ENCODE measurements at regions of chr2 and their contacts with region 1.

Region 1: DNA sequence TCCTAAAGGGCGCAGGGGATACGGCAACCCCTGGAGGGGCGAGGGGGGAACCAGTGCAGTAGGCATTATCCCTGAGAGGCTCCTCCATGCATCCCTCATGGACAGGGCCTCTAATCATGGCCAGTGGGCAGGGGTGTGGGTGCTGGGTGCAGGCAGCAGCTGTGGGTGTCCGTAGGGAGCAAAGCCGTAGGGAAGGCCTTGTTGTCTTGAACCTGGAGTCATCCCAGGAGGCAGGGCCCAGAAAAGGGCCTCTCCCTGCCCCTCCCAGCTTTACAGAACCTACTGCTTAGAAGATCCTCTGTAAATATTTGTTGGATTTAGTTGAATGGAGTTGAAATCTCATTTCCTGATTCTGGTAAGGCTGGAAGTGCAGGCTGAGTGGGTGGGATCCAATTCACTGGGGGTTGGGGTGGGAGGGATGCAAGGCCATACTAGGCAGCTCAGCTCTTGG is 207.0 kb upstream of the HAAO start:
- DNase-seq: no peak
- H3K4me3 ChIP-seq: no peak overlapping the region
- H3K27ac ChIP-seq: no peak overlapping the region
- H3K4me1 ChIP-seq: no peaks in the 10 kb centered on the region
- H3K27me3 ChIP-seq: no peaks in the 10 kb centered on the region
- CTCF ChIP-seq: no peak

Region 2: DNA sequence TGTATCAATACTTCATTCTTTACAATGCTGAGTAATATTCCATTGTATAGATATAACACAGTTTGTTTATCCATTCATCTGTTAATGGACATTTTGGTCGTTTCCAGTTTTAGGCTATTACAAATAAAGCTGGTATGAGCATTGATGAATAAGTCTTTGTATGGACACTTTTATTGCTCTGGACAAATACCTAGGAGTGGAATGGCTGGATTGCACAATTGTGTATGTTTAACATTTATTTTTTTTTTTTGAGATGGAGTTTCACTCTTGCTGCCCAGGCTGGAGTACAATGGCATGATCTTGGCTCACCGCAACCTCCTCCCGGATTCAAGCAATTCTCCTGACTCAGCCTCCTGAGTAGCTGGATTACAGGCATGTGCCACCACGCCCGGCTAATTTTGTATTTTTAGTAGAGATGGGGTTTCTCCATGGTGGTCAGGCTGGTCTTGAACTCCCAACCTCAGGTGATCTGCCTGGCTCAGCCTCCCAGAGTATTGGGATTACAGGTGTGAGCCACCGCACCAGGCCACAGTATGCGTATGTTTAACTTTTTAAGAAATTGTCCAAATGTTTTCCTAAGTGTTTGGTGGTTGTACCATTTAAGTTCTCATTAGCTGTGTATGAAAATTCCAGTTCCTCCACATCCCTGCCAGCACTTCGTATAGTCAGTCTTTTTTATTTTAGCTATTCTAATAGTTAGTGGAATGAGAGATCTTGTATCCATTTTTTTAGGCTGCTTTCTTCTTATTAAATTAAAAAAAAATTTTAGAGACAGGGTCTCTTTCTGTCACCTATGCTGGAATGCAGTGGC is 12.1 kb before region 1 on chr2:
- CTCF ChIA-PET with region 1: no interaction called
- dilution Hi-C with region 1: no loop called
- in situ Hi-C with region 1: no loop called
- intact Hi-C with region 1: loop called (anchors 1 kb)
- DNase-seq: peak; percentile 97
- H3K4me3 ChIP-seq: no peak overlapping the region
- H3K27ac ChIP-seq: peak overlapping the region; percentile 98
- H3K4me1 ChIP-seq: peaks cover 34% of the 10 kb centered on the region
- H3K27me3 ChIP-seq: no peaks in the 10 kb centered on the region
- CTCF ChIP-seq: no peak

Region 3: GRCh38 chr2:43537137-43537536 is 537.7 kb after region 1 on chr2:
- CTCF ChIA-PET with region 1: no interaction called
- dilution Hi-C with region 1: no loop called
- in situ Hi-C with region 1: no loop called
- intact Hi-C with region 1: no loop called
- DNase-seq: no peak
- H3K4me3 ChIP-seq: no peak overlapping the region
- H3K27ac ChIP-seq: no peak overlapping the region
- H3K4me1 ChIP-seq: peaks cover 30% of the 10 kb centered on the region
- H3K27me3 ChIP-seq: no peaks in the 10 kb centered on the region
- CTCF ChIP-seq: no peak